ENCODE measurements at regions of chr3 and their contacts with region 1.

Region 1: GRCh38 chr3:4986782-4987537 is 7.7 kb downstream of the BHLHE40 start:
- DNase-seq: peak; percentile 64
- ATAC-seq: peak; percentile 33
- H3K4me3 Mint-ChIP-seq: peak overlapping the region; percentile 83
- H3K27ac Mint-ChIP-seq: peak overlapping the region; percentile 76
- H3K4me1 Mint-ChIP-seq: peaks cover 76% of the 10 kb centered on the region
- H3K27me3 Mint-ChIP-seq: no peaks in the 10 kb centered on the region
- CTCF ChIP-seq: no peak

Region 2: DNA sequence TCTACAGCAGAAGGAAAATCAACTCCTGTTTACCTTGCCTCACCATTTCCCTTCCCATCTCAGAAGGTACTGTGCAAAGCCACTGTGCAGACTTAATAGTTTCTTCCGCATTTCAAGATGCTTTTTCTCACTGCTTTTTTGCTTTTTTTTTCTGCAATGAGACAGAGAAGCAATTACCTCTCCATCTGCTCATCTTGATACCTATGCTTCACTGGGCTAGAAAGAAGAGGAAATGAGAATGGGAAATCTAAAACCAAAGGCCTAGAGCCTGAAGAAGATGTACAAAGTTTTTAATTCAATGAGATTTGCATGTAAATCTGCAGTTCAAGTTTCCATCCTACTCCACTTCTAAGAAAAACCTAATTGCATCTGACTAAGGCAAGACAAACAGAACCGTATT is 921.9 kb before region 1 on chr3:
- CTCF ChIA-PET with region 1: no interaction called
- POLR2A ChIA-PET with region 1: no interaction called
- intact Hi-C with region 1: loop called (anchors 10 kb)
- DNase-seq: no peak
- ATAC-seq: peak; percentile 89
- H3K4me3 Mint-ChIP-seq: peak overlapping the region; percentile 33
- H3K27ac Mint-ChIP-seq: peak overlapping the region; percentile 72
- H3K4me1 Mint-ChIP-seq: peaks cover 95% of the 10 kb centered on the region
- H3K27me3 Mint-ChIP-seq: no peaks in the 10 kb centered on the region
- CTCF ChIP-seq: no peak

Region 3: DNA sequence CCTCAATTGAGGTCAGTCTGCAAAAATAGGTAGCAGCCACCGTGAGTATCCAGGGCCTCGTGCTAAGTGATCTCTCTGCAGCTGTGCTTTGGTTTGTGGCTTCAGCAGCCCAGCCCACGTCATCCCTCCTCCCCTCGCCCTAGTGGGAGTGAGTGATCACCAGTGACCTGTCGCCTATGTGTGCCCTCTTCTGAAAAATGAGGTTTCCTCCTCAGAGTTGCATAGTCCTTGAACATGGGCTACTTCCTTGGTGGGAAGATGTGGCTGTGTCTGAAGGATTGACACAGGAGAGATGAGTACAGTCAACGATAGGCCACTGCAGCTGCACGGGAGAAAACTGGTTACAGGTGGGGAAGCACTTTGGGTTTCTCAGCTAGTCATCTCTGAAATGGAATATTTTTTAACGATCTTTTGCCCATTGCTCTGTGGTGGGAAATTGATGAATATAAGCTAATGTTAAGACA is 152.5 kb before region 1 on chr3:
- CTCF ChIA-PET with region 1: no interaction called
- POLR2A ChIA-PET with region 1: interaction called, 12 read pairs
- intact Hi-C with region 1: no loop called
- DNase-seq: no peak
- ATAC-seq: peak; percentile 56
- H3K4me3 Mint-ChIP-seq: no peak overlapping the region
- H3K27ac Mint-ChIP-seq: peak overlapping the region; percentile 59
- H3K4me1 Mint-ChIP-seq: peaks cover 68% of the 10 kb centered on the region
- H3K27me3 Mint-ChIP-seq: no peaks in the 10 kb centered on the region
- CTCF ChIP-seq: no peak

Region 4: DNA sequence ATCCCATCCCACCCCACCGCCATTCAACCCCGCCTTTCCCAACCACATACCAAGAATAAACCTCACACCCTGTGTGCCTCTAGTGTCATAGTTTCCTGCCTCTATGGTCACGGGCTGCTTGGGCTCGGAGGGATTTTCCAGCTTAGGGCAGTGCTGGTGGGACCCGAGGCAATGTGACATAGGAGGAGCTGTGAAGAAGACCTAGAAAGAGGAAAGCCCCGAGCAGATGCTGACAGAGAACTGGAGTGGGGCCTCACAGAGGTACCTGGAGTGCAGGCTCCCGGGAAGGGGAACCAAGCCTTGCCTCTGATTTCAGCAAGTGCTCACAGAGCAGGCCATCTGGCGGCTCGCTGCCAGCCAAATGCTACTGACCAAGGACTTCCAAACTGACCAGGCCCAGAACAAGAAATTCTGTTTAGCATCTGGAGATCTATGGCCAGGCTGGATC is 19.8 kb after region 1 on chr3:
- CTCF ChIA-PET with region 1: interaction called, 65 read pairs
- POLR2A ChIA-PET with region 1: interaction called, 478 read pairs
- intact Hi-C with region 1: loop called (anchors 1 kb)
- DNase-seq: peak; percentile 58
- ATAC-seq: peak; percentile 62
- H3K4me3 Mint-ChIP-seq: peak overlapping the region; percentile 62
- H3K27ac Mint-ChIP-seq: peak overlapping the region; percentile 84
- H3K4me1 Mint-ChIP-seq: peaks cover 67% of the 10 kb centered on the region
- H3K27me3 Mint-ChIP-seq: no peaks in the 10 kb centered on the region
- CTCF ChIP-seq: no peak

Region 5: GRCh38 chr3:5026331-5027218 is 39.6 kb after region 1 on chr3:
- CTCF ChIA-PET with region 1: interaction called, 6 read pairs
- POLR2A ChIA-PET with region 1: interaction called, 43 read pairs
- intact Hi-C with region 1: loop called (anchors 1 kb)
- DNase-seq: peak; percentile 57
- ATAC-seq: peak; percentile 72
- H3K4me3 Mint-ChIP-seq: peak overlapping the region; percentile 84
- H3K27ac Mint-ChIP-seq: peak overlapping the region; percentile 78
- H3K4me1 Mint-ChIP-seq: peaks cover 39% of the 10 kb centered on the region
- H3K27me3 Mint-ChIP-seq: no peaks in the 10 kb centered on the region
- CTCF ChIP-seq: no peak

Region 6: GRCh38 chr3:5194341-5195159 is 207.6 kb after region 1 on chr3:
- CTCF ChIA-PET with region 1: no interaction called
- POLR2A ChIA-PET with region 1: interaction called, 4 read pairs
- intact Hi-C with region 1: loop called (anchors 2 kb)
- DNase-seq: no peak
- ATAC-seq: peak; percentile 55
- H3K4me3 Mint-ChIP-seq: peak overlapping the region; percentile 62
- H3K27ac Mint-ChIP-seq: peak overlapping the region; percentile 89
- H3K4me1 Mint-ChIP-seq: peaks cover 94% of the 10 kb centered on the region
- H3K27me3 Mint-ChIP-seq: no peaks in the 10 kb centered on the region
- CTCF ChIP-seq: no peak

Measured in activated B cell treated with CpG ODN at 0.5 μM for 24 hours (primary cell).